ENCODE measurements at regions of chr17 and their contacts with region 1.

Region 1: GRCh38 chr17:49556223-49556971 is 19.3 kb upstream of the NXPH3 start:
- DNase-seq: peak; percentile 66 to 85 (median 83)
- H3K4me3 ChIP-seq: peak overlapping the region in 1 of 7 experiments; percentile 30
- H3K27ac ChIP-seq: no peak overlapping the region
- H3K4me1 ChIP-seq: peaks cover 0 to 7% (median 6%) of the 10 kb centered on the region in 4 experiments
- H3K27me3 ChIP-seq: peaks cover 0 to 2% (median 0%) of the 10 kb centered on the region in 5 experiments

Region 2: GRCh38 chr17:49315551-49316257 is 240.7 kb before region 1 on chr17:
- CTCF ChIA-PET with region 1: interaction called, 21 read pairs
- POLR2A ChIA-PET with region 1: no interaction called
- DNase-seq: peak; percentile 84 to 92 (median 91)
- H3K4me3 ChIP-seq: peak overlapping the region in 3 of 7 experiments; percentile 11 to 51 (median 21)
- H3K27ac ChIP-seq: peak overlapping the region in 1 of 2 experiments; percentile 62
- H3K4me1 ChIP-seq: peaks cover 11 to 29% (median 23%) of the 10 kb centered on the region in 4 experiments
- H3K27me3 ChIP-seq: no peaks in the 10 kb centered on the region

Region 3: DNA sequence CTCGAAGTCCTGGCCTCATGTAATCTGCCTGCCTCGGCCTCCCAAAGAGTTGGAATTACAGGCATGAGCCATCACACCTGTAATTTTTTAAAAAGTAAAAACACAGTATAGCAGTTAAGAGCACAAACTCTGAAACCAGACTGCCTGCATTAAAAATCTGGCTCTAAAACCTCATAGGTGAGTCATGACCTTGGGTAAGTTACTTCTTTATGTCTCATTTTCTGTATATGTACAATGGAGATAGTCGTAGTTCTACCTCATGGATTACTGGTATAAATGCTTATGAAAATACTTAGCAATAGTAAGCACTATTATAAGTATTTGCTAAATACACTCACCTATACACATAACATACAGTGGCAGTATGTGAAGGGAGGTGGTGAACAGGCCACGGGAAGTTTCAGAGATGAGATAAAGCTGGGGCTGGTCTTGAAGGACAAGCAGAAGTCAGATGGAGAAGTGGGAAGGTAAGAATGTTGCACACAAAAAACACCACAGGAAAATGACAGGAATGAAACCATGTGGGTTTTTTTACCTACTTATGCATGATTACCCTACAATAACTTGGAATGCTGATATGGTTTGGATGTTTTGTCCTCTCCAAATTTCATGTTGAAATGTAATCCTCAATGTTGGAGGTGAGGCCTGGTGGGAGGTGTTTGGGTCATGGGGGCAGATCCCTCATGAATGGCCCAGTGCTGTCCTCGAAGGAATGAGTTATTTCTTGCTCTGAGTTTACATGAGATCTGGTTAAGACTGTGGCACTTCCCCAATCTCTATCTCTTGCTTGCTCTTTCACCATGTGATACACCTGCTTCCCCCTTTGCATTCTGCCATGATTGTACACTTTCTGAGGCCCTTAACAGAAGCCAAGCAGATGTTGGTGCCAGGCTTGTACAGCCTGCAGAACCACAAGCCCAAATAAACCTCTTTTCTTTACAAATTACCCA is 228.3 kb before region 1 on chr17:
- CTCF ChIA-PET with region 1: no interaction called
- POLR2A ChIA-PET with region 1: no interaction called
- DNase-seq: peak in 2 of 3 donors; percentile 92 to 95
- H3K4me3 ChIP-seq: no peak overlapping the region
- H3K27ac ChIP-seq: peak overlapping the region in 1 of 2 experiments; percentile 9
- H3K4me1 ChIP-seq: peaks cover 7 to 20% (median 9%) of the 10 kb centered on the region in 4 experiments
- H3K27me3 ChIP-seq: no peaks in the 10 kb centered on the region

Region 4: GRCh38 chr17:49414622-49415350 is 141.6 kb before region 1 on chr17 and contains the start of gene PHB1:
- CTCF ChIA-PET with region 1: interaction called, 168 read pairs
- POLR2A ChIA-PET with region 1: no interaction called
- DNase-seq: peak; percentile 97 to 99 (median 98)
- H3K4me3 ChIP-seq: peak within 1 kb of the TSS; percentile 80 to 99 (median 88)
- H3K27ac ChIP-seq: peak within 1 kb of the TSS; percentile 30 to 72
- H3K4me1 ChIP-seq: peaks cover 9 to 25% (median 19%) of the 10 kb centered on the region in 4 experiments
- H3K27me3 ChIP-seq: no peaks in the 10 kb centered on the region

Region 5: GRCh38 chr17:49508061-49508865 is 48.1 kb before region 1 on chr17:
- CTCF ChIA-PET with region 1: interaction called, 12 read pairs
- POLR2A ChIA-PET with region 1: no interaction called
- DNase-seq: peak in 2 of 3 donors; percentile 20 to 29
- H3K4me3 ChIP-seq: no peak overlapping the region
- H3K27ac ChIP-seq: no peak overlapping the region
- H3K4me1 ChIP-seq: peaks cover 0 to 11% (median 0%) of the 10 kb centered on the region in 4 experiments
- H3K27me3 ChIP-seq: peaks cover 0 to 38% (median 14%) of the 10 kb centered on the region in 5 experiments

Region 6: DNA sequence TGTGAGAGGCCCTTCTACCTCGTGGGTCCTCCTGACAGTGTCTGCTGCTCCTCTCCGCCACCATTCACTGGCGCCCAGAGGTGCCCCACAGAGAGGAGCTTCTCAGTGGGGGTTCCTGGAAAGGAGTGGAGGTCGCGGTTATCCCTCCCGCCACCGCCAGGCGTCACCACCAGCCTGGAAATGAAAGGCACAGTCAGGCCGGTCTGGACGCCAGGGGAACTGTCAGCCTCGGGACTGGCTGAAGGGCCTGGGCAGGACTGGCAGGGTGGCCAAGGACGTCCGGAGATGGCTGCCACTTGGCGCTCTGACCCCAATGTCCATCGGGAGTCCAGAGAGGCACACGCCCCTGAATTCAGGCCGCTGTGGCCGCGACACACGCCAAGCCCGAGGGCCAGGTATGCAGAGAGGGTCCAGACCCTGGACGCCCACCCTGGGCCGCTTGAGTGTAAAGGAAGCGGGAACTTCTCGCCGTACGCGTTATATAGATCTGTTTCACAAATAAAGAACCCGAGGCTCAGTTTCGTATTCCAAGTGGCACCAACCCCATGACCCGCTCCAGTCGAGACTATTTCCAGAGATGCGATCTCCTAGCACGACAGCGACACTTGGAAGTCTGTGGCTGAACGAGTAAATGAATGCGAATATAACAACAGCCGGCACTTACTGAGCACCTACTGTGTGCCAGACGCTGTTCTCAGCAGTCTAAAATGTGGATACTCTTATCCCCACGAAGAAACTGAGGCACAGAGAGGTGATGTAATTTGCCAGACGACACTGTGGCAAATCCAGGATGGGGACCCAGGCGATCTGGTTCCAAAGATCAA is 11.7 kb after region 1 on chr17:
- CTCF ChIA-PET with region 1: interaction called, 42 read pairs
- POLR2A ChIA-PET with region 1: no interaction called
- DNase-seq: peak; percentile 69 to 83 (median 82)
- H3K4me3 ChIP-seq: peak overlapping the region in 6 of 7 experiments; percentile 36 to 82 (median 62)
- H3K27ac ChIP-seq: no peak overlapping the region
- H3K4me1 ChIP-seq: peaks cover 0 to 30% (median 23%) of the 10 kb centered on the region in 4 experiments
- H3K27me3 ChIP-seq: peaks cover 0 to 14% (median 7%) of the 10 kb centered on the region in 5 experiments

Region 7: DNA sequence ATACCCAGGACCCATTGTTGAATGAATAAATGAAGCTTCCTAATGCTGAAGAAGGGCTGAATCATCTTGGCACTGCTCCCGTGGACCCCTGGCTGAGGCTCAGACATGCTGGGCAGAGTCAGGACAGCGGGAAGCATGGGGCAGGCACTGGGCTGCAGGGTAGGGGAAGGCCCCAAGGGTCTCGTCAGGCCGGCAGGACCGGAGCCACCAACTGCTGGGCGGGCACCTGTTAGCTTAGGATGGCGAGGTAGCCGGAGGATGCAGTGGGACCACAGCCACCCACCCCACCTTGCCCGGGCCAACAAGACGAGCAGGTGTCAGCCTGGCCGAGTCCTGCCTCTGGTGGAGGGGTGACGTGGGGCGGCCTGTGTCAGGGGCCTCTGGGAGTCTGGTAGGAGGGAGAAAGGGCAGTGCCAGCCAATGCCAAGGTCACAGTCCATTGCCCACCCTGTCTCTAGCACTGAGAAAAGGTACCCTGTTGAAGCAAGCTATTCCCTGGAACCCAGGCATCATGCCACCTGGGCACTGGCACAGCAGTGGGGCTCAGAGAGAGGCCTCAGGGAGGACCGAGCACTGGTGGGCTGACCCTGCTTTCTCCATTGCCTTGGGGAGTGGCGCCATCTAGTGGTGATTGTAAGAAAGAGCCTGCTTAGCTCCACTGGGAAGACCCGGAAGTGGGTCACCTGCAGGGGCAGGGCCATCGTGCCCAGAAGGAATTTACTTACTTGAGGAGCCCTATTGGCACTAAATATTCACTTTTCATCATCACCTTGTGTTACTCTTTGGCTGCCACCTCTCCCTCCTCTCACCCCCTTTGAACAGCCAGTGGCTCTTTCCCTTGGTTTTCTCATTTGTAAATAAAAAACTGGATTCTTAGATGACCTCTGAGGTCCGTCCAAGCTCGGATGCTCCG is 441.6 kb after region 1 on chr17:
- CTCF ChIA-PET with region 1: interaction called, 24 read pairs
- POLR2A ChIA-PET with region 1: no interaction called
- DNase-seq: peak; percentile 89 to 92 (median 90)
- H3K4me3 ChIP-seq: no peak overlapping the region
- H3K27ac ChIP-seq: no peak overlapping the region
- H3K4me1 ChIP-seq: peaks cover 0 to 30% (median 21%) of the 10 kb centered on the region in 4 experiments
- H3K27me3 ChIP-seq: peaks cover 11 to 88% (median 53%) of the 10 kb centered on the region in 5 experiments